ENCODE measurements at regions of chr5 and their contacts with region 1.

Region 1: GRCh38 chr5:151740336-151740942 is 18.0 kb downstream of the ATOX1 start:
- DNase-seq: peak; percentile 88
- H3K4me3 ChIP-seq: peak overlapping the region; percentile 39
- CTCF ChIP-seq: peak; percentile 57

Region 2: DNA sequence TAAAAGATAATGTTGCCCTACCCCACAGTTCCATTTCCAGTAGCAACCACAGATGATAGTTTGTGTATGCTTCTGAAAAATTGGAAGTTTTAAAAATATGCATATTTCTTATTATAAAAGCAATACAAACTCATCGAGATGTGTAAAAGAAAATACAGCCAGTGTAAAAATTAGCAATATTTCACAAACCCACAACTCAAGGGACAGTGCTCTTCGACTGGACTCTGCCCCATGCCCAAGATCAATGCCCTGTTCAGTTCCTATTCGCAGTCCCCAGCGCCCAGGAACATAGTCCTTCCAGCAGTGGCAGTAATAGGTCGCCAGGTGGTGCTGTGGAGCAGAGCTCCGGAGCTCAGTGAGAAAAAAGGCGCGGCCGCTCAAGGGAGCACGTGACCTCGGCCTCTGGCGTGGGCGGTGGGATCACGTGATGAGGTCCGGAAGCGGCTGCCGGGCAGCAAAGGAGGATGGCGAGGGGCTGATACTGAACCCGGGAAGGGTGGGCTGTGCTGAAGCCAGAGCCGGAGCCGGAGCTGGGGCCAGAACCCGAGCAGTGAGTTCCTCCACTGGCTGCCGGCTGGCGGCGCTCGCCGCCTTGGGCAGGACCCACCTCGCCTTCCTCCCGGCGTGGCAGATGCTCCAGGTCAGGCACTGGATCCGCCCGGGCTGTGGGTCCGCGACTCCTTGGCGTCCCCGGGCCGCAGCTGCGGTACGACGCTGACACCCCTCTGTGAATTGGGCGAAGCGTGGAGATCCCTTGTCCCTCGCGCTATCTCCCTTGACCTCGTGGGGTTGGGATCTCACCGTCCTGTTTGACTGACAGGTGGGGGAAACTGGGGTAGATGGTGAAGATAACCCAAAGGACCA is 293.0 kb before region 1 on chr5 and contains the start of gene SLC36A1:
- CTCF ChIA-PET with region 1: interaction called, 56 read pairs
- POLR2A ChIA-PET with region 1: interaction called, 4 read pairs
- DNase-seq: no peak
- H3K4me3 ChIP-seq: peak within 1 kb of the TSS; percentile 96
- CTCF ChIP-seq: peak; percentile 93

Region 3: DNA sequence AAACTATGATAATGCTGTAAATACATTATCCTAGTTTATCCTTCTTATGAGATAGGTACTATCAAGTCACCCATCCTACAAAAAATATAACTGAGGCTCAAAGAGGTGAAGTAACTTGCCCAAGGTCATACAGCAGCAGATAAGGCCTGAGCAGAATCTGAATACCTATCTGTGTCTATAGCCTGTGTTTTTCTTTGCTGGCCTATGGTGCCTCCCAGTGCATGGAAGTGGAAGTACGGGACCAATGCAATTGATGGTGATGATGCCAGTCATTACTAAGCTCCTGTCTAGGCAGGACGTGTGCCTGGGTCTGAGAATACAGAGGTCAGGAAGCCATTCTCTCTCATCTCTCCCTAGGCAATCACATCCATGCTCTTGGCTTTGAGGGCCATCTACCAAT is 217.1 kb before region 1 on chr5:
- CTCF ChIA-PET with region 1: interaction called, 13 read pairs
- POLR2A ChIA-PET with region 1: no interaction called
- DNase-seq: no peak
- H3K4me3 ChIP-seq: no peak overlapping the region
- CTCF ChIP-seq: peak; percentile 52

Region 4: GRCh38 chr5:151686674-151687407 is 53.6 kb before region 1 on chr5 and contains the start of gene SPARC:
- CTCF ChIA-PET with region 1: interaction called, 198 read pairs
- POLR2A ChIA-PET with region 1: interaction called, 383 read pairs
- DNase-seq: peak; percentile 87
- H3K4me3 ChIP-seq: peak within 1 kb of the TSS; percentile 100
- CTCF ChIP-seq: peak; percentile 4

Region 5: GRCh38 chr5:151699071-151699901 is 41.2 kb before region 1 on chr5:
- CTCF ChIA-PET with region 1: interaction called, 12 read pairs
- POLR2A ChIA-PET with region 1: interaction called, 40 read pairs
- DNase-seq: peak; percentile 95
- H3K4me3 ChIP-seq: no peak overlapping the region
- CTCF ChIP-seq: no peak

Region 6: DNA sequence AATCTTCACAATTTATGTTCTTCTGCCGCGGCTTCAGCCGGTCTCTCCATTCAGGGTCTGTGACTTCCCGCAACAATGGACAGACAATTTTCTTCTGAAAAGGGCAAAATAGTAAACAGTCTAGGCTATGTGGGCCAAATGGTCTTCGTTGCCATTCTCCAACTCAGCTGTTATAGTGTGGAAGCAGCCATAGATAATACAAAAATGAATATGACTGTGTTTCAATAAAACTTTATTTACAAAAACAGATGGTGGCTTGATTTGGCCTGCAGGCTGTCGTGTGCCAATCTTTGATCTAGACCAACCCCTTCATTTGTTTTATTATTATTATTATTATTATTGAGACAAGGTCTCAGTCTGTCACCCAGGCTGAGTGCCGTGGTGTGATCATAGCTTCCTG is 10.1 kb before region 1 on chr5:
- CTCF ChIA-PET with region 1: interaction called, 13 read pairs
- POLR2A ChIA-PET with region 1: interaction called, 7 read pairs
- DNase-seq: no peak
- H3K4me3 ChIP-seq: no peak overlapping the region
- CTCF ChIP-seq: no peak

Region 7: GRCh38 chr5:151771259-151772028 is 31.0 kb after region 1 on chr5 and contains the start of gene G3BP1:
- CTCF ChIA-PET with region 1: interaction called, 7 read pairs
- POLR2A ChIA-PET with region 1: interaction called, 16 read pairs
- DNase-seq: peak; percentile 100
- H3K4me3 ChIP-seq: peak within 1 kb of the TSS; percentile 87
- CTCF ChIP-seq: peak; percentile 66

Region 8: DNA sequence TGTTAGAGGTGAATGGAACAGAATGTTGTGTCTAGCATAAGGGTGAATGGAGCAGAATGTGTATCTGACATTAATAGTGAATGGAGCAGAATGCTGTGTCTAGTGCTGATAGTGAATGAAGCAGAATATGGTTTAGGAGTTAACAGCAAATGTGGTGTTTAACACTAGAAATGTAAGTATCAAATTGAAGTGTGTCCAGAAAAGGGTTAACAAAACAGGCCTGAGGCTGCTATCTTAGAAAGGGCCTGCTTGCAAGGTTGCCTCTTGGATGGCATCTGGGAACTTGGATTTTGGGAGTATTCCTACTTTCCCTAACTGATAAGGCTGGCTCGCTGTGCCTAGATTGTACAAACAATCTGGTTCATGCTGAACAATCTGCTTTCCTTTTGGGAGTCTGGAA is 107.4 kb after region 1 on chr5:
- CTCF ChIA-PET with region 1: no interaction called
- POLR2A ChIA-PET with region 1: no interaction called
- DNase-seq: no peak
- H3K4me3 ChIP-seq: no peak overlapping the region
- CTCF ChIP-seq: no peak